Psoas muscle (tissue), 8 donors: ENCODE measurements at regions of chr1 and their contacts with region 1.

Region 1: GRCh38 chr1:201114236-201115131 is 2.3 kb upstream of the CACNA1S start:
- DNase-seq: peak; percentile 89 to 90
- ATAC-seq: peak; percentile 84 to 89 (median 88)
- H3K4me3 ChIP-seq: peak overlapping the region; percentile 78
- H3K27ac ChIP-seq: peak overlapping the region; percentile 95
- H3K4me1 ChIP-seq: peaks cover 19% of the 10 kb centered on the region
- H3K27me3 ChIP-seq: no peaks in the 10 kb centered on the region
- CTCF ChIP-seq: peak; percentile 85

Region 2: DNA sequence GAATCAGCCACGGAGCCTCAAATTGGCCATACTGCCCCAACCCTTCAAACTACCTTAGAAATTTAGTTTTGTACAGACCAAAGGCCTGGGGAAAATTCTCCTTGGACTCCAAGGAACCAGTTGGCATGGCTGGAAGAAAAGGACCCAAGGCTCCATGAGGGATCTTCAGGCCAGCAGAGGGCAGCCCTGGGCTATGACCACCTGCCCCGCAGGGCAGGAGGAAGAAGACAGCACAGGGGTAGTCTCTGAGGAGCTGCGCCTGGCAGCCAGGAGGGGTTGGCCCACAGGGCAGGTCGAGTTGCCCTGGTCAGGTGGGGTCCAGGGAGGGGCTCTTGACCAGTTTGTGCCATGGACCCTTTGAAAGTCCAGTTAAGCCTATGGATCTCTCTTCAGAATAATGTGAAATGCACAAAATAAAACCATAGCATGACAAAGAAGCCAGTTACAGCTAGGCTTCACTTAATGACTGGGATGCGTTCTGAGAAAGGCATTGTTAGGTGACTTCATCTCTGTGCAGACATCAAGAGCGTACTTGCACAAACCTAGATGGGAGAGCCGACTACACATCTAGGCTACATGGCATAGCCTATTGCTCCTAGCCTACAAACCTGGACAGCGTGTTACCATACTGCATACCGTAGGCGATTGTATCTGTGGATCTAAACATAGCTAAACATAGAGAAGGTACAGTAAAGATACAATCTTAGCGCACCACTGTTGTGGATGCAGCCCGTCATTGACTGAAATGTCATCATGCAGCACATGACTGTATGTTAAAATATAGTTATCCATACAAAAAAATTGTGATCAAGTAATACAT is 28.4 kb before region 1 on chr1:
- intact Hi-C with region 1: loop called (anchors 1 to 2 kb)
- DNase-seq: peak; percentile 71 to 88
- ATAC-seq: peak; percentile 89 to 96 (median 92)
- H3K4me3 ChIP-seq: no peak overlapping the region
- H3K27ac ChIP-seq: peak overlapping the region; percentile 54
- H3K4me1 ChIP-seq: peaks cover 26% of the 10 kb centered on the region
- H3K27me3 ChIP-seq: no peaks in the 10 kb centered on the region
- CTCF ChIP-seq: peak; percentile 73